WTC11 (cell line): ENCODE measurements at regions of chr20 and their contacts with region 1.

Region 1: DNA sequence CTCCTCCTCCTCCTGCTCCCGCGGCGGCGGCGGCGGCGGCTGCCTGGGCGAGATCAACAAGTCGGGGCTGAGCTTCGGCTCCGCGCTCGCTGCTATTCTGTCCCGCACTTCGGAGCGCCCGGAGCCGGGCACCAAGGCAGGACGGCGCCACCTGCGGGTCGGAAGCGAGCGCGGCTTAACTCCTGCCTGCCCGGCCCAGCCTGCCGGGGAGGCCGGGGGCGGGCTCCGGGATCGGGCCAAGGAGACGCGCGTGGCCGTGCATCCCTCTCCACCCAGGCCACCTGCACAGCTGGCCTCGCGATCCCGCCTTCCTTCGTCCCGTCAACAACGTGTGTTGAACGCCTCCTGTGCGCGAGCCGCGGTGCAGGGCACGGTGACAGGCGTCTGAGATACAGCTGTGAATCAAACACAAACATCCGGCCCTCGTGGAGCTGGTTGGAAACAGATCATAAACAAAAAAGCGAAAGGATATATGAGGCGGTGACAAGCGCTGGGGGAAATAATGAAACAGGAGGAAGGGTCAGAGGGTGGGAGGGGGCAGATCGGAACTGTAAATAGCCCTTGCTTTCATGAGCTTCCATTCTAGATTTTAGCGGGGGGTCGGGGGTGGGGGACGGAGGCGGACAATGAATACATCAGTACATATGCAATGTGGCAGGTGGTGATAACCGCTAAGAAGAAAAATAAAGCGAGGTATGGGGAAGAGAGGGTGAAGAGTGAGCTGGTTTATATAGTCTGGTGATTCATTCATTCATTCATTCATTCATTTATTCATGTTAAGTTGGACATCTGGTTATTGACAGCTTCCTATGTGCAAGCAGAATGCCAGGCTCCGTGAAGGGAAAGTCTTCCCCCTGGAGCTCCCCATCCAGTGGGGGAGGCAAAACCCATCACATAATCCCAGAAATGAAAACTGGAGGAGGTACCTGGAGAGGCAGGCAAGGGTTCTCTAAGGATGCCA is 2.0 kb upstream of the KCNB1 start:
- DNase-seq: peak; percentile 90
- ATAC-seq: peak; percentile 78
- H3K4me3 Mint-ChIP-seq: peak overlapping the region; percentile 84
- H3K27ac Mint-ChIP-seq: no peak overlapping the region
- H3K4me1 Mint-ChIP-seq: no peaks in the 10 kb centered on the region; the same call in 1 of the 2 replicates
- H3K27me3 Mint-ChIP-seq: peaks cover 52% of the 10 kb centered on the region
- CTCF ChIP-seq: peak; percentile 65

Region 2: DNA sequence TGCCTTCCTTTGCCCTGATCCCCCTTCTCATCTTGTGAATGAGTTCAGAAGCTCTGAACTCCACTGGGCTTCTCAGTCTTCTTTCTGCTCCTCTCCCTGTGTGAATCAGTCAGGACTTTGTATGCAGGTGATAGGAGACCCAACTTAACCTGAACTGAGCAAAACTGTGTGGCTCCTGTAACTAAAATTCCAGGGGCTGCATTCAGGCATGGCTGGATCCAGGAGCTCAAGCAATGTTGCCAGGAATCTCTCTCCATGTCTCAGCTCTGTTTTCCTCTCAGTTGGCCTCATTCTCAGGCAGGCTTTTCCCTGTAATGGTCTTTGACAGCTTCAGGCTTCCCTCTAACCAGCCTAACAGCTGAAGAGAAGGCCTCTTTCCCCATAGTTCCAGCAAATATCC is 155.7 kb before region 1 on chr20:
- CTCF ChIA-PET with region 1: interaction called, 117 read pairs
- POLR2A ChIA-PET with region 1: interaction called, 3 read pairs
- DNase-seq: no peak
- ATAC-seq: no peak
- H3K4me3 Mint-ChIP-seq: no peak overlapping the region
- H3K27ac Mint-ChIP-seq: no peak overlapping the region
- H3K4me1 Mint-ChIP-seq: peaks cover 14% of the 10 kb centered on the region
- H3K27me3 Mint-ChIP-seq: peaks cover 8% of the 10 kb centered on the region; the same call in 1 of the 2 replicates
- CTCF ChIP-seq: no peak

Region 3: DNA sequence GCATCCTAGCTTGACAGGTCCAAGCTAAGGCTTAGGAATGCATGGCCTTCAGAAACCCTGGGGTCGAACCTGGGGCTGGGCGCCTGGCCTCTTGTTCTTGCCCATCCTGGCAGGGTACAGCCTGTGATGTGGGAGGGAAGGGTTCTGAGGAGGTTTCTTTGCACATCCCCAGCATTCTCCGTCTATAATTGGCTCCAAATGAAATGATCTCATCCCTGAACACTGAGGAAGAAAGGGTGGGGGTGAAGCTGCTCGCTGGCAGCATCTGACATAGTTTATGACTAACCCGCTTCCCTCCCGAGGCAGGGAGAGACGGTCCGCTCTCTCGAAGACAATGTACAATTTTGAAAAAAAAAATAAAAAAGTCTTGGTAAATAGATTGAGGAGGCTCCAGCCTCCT is 139.5 kb before region 1 on chr20:
- CTCF ChIA-PET with region 1: interaction called, 24 read pairs
- POLR2A ChIA-PET with region 1: no interaction called
- DNase-seq: no peak
- ATAC-seq: no peak
- H3K4me3 Mint-ChIP-seq: no peak overlapping the region
- H3K27ac Mint-ChIP-seq: no peak overlapping the region
- H3K4me1 Mint-ChIP-seq: peaks cover 5% of the 10 kb centered on the region
- H3K27me3 Mint-ChIP-seq: no peaks in the 10 kb centered on the region
- CTCF ChIP-seq: no peak

Region 4: DNA sequence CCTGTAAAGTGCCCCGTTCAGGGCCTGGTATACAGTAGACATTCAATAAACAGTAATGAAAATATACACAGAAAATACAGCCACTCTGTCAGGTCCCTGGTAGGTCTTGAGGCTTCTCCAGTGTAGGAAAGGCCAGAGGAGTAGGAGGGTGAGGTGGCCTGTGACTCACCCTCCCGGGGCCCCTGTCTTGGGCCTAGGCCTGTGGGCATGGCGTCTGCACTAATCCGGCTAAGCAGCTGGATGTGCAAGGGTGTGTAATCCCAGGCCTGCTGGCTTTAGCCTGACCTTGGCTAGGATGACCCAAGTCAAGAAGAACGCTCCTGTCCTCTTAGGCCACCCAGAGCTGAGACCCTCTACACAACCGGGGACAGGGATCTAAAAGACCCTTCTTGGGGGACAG is 86.9 kb before region 1 on chr20:
- CTCF ChIA-PET with region 1: interaction called, 17 read pairs
- POLR2A ChIA-PET with region 1: no interaction called
- DNase-seq: no peak
- ATAC-seq: no peak
- H3K4me3 Mint-ChIP-seq: no peak overlapping the region
- H3K27ac Mint-ChIP-seq: no peak overlapping the region
- H3K4me1 Mint-ChIP-seq: peaks cover 8% of the 10 kb centered on the region; the same call in 1 of the 2 replicates
- H3K27me3 Mint-ChIP-seq: no peaks in the 10 kb centered on the region
- CTCF ChIP-seq: no peak

Region 5: GRCh38 chr20:49435659-49436058 is 48.8 kb before region 1 on chr20:
- CTCF ChIA-PET with region 1: interaction called, 15 read pairs
- POLR2A ChIA-PET with region 1: no interaction called
- DNase-seq: no peak
- ATAC-seq: peak; percentile 30; the same call in 1 of the 2 replicates
- H3K4me3 Mint-ChIP-seq: no peak overlapping the region
- H3K27ac Mint-ChIP-seq: no peak overlapping the region
- H3K4me1 Mint-ChIP-seq: no peaks in the 10 kb centered on the region
- H3K27me3 Mint-ChIP-seq: no peaks in the 10 kb centered on the region
- CTCF ChIP-seq: no peak

Region 6: GRCh38 chr20:49466114-49466912 is 18.1 kb before region 1 on chr20:
- CTCF ChIA-PET with region 1: interaction called, 14 read pairs
- POLR2A ChIA-PET with region 1: no interaction called
- DNase-seq: no peak
- ATAC-seq: no peak
- H3K4me3 Mint-ChIP-seq: no peak overlapping the region
- H3K27ac Mint-ChIP-seq: no peak overlapping the region
- H3K4me1 Mint-ChIP-seq: peaks cover 5% of the 10 kb centered on the region
- H3K27me3 Mint-ChIP-seq: no peaks in the 10 kb centered on the region; the same call in 1 of the 2 replicates
- CTCF ChIP-seq: no peak

Region 7: GRCh38 chr20:49508435-49509199 is 24.2 kb after region 1 on chr20:
- CTCF ChIA-PET with region 1: interaction called, 76 read pairs
- POLR2A ChIA-PET with region 1: interaction called, 3 read pairs
- DNase-seq: no peak
- ATAC-seq: peak; percentile 75
- H3K4me3 Mint-ChIP-seq: no peak overlapping the region
- H3K27ac Mint-ChIP-seq: no peak overlapping the region
- H3K4me1 Mint-ChIP-seq: 0 out of 2 replicates have a peak, but pooled peaks cover under 1% of the 10 kb centered on the region
- H3K27me3 Mint-ChIP-seq: no peaks in the 10 kb centered on the region
- CTCF ChIP-seq: peak; percentile 43

Region 8: GRCh38 chr20:49818816-49819215 is 334.4 kb after region 1 on chr20:
- CTCF ChIA-PET with region 1: no interaction called
- POLR2A ChIA-PET with region 1: no interaction called
- DNase-seq: no peak
- ATAC-seq: no peak
- H3K4me3 Mint-ChIP-seq: no peak overlapping the region
- H3K27ac Mint-ChIP-seq: no peak overlapping the region
- H3K4me1 Mint-ChIP-seq: peaks cover under 1% of the 10 kb centered on the region; the same call in 1 of the 2 replicates
- H3K27me3 Mint-ChIP-seq: no peaks in the 10 kb centered on the region
- CTCF ChIP-seq: no peak